Posterior vena cava (tissue), 2 donors: ENCODE measurements at regions of chr14 and their contacts with region 1.

Region 1: DNA sequence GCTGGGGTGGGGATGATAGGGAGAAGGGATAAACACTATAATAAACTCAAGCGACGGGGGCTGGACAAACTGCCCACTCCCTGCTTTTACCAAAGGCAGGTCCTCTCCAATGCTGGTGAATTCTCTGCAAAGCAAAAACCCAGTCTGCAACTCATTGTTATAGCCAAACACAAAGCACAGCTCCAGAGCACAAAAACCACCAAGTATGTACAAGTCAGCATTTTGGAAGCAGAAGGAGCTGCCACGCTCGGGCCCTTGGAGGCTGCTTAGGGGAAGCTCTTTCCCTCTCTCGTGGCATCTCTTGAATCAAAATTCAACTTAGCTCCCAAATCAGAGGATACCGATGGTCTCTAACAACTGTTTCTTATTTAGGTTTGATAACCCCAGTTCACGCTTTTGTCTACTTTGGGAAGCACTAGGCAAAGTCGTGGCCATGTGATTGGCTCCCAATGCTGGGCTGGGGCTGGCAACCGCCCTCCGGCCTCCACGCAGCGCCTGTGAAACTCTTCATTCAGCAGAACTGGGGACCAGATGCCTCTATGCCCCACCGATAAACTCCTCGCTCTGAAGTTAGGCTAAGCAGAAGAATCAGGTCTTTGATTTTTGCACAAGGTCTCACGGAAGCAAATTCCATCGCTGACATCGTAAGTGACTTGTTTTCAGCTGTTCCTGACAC is 158.5 kb upstream of the FOXN3 start:
- DNase-seq: no peak

Region 2: DNA sequence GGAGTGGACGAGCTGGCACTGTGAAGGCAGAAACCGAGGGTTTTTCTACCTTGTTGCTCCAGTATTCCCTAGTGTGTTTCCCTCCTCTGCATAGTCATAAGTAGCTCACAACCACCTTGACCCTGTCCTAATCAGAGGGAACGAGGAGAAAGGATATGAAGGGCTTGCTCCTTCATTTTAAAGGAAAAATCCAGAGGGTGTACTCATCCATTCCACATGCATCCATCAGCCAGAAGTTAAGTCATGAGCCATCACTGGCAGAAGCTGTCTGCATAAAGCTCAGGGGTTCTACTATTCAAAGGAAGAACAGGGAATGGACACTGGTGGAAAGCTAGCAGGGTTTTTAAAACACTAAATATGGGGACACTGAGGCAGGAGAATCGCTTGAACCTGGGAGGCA is 74.1 kb before region 1 on chr14:
- intact Hi-C with region 1: loop called in 1 of 2 experiments (anchors 2 kb)
- DNase-seq: no peak